Activated B cell treated with CpG ODN at 0.5 μM for 24 hours (primary cell): ENCODE measurements at regions of chr1 and their contacts with region 1.

Region 1: DNA sequence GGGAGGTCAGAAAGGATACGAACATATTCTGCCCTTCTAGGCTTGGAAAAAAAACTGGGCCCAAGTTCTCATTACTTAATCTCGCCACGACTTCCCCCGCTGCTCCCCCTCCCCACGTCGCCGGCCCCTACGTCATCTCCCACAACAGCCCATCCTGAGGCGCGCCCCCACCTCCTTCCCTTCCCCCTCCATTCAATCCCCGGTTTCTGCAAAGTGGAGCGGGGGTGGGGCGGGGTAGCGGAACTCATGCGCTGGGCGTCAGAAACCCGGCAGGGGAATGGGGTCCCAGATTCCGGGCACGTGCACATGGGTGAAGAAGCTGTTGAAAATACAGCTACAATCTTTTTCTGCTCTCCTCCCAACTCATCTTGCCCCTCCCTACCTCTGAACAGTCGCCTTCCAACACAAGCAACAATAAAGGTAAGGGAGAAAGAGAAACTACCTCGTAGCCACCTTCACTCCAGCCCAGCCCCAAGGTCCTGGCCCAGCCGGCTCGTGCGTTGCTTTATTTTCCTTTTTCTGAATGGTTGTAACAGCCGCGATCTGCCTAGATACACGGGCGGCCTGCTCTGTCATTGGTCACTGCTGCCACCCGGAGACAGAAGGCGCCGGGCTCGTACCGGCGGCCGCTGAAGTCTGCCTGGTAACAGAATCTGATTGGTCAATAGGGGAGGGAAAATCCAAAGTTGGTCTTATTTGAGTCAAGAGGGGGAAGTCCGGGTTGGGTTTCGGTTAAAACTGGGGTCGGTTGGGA is at the start of gene RFX5:
- DNase-seq: peak; percentile 77
- ATAC-seq: peak; percentile 91
- H3K4me3 Mint-ChIP-seq: peak within 1 kb of the TSS; percentile 98
- H3K27ac Mint-ChIP-seq: peak within 1 kb of the TSS; percentile 100
- H3K4me1 Mint-ChIP-seq: peaks cover 55% of the 10 kb centered on the region
- H3K27me3 Mint-ChIP-seq: no peaks in the 10 kb centered on the region
- CTCF ChIP-seq: no peak
- total RNA-seq, gene RFX5: 222 and 262 TPM in 2 replicates

Region 2: GRCh38 chr1:150321826-150322166 is 1025.2 kb before region 1 on chr1:
- CTCF ChIA-PET with region 1: no interaction called
- POLR2A ChIA-PET with region 1: no interaction called
- intact Hi-C with region 1: loop called (anchors 5 kb)
- DNase-seq: no peak
- ATAC-seq: no peak
- H3K4me3 Mint-ChIP-seq: peak overlapping the region; percentile 100
- H3K27ac Mint-ChIP-seq: peak overlapping the region; percentile 99
- H3K4me1 Mint-ChIP-seq: peaks cover 22% of the 10 kb centered on the region
- H3K27me3 Mint-ChIP-seq: peaks cover 2% of the 10 kb centered on the region
- CTCF ChIP-seq: no peak

Region 3: GRCh38 chr1:151281969-151282882 is 64.7 kb before region 1 on chr1 and contains the start of gene ZNF687:
- CTCF ChIA-PET with region 1: no interaction called
- POLR2A ChIA-PET with region 1: interaction called, 4 read pairs
- intact Hi-C with region 1: loop called (anchors 1 kb)
- DNase-seq: peak; percentile 96
- ATAC-seq: peak; percentile 88
- H3K4me3 Mint-ChIP-seq: peak within 1 kb of the TSS; percentile 99
- H3K27ac Mint-ChIP-seq: peak within 1 kb of the TSS; percentile 99
- H3K4me1 Mint-ChIP-seq: peaks cover 54% of the 10 kb centered on the region
- H3K27me3 Mint-ChIP-seq: no peaks in the 10 kb centered on the region
- CTCF ChIP-seq: no peak
- total RNA-seq, gene ZNF687: 38.8 and 40.3 TPM in 2 replicates

Region 4: DNA sequence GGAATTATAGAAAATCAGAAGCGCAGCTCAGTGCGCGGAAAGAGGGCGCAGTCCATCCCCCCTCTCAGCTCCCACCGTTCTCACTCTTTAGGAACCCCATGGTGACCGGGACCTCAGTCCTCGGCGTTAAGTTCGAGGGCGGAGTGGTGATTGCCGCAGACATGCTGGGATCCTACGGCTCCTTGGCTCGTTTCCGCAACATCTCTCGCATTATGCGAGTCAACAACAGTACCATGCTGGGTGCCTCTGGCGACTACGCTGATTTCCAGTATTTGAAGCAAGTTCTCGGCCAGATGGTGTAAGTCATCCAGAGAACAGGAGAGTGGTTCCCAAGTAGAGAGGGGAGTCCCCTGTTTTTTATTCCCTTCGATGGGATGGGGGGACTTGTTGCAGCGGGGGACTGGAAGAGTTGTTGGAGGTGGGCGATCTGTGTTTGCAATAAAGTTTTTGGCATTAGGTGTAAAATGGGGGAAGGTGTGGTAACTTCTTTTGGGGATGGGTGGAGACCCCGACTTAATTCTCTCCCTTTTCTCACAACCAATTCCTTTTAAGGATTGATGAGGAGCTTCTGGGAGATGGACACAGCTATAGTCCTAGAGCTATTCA is 53.0 kb after region 1 on chr1:
- CTCF ChIA-PET with region 1: no interaction called
- POLR2A ChIA-PET with region 1: interaction called, 61 read pairs
- intact Hi-C with region 1: loop called (anchors 1 kb)
- DNase-seq: no peak
- ATAC-seq: peak; percentile 3
- H3K4me3 Mint-ChIP-seq: peak overlapping the region; percentile 89
- H3K27ac Mint-ChIP-seq: peak overlapping the region; percentile 98
- H3K4me1 Mint-ChIP-seq: peaks cover 31% of the 10 kb centered on the region
- H3K27me3 Mint-ChIP-seq: no peaks in the 10 kb centered on the region
- CTCF ChIP-seq: no peak